ENCODE measurements at regions of chr12 and their contacts with region 1.

Region 1: GRCh38 chr12:55996715-55997534 is at the start of gene SUOX:
- DNase-seq: peak; percentile 98
- H3K4me3 ChIP-seq: peak within 1 kb of the TSS; percentile 17 to 73 (median 40)
- H3K27ac ChIP-seq: no peak within 1 kb of the TSS
- H3K4me1 ChIP-seq: peaks cover 10% of the 10 kb centered on the region
- H3K27me3 ChIP-seq: no peaks in the 10 kb centered on the region
- CTCF ChIP-seq: no peak
- POLR2A ChIP-seq: peak; percentile 85
- total RNA-seq, gene SUOX: 24.3 and 24.8 TPM in 2 replicates

Region 2: DNA sequence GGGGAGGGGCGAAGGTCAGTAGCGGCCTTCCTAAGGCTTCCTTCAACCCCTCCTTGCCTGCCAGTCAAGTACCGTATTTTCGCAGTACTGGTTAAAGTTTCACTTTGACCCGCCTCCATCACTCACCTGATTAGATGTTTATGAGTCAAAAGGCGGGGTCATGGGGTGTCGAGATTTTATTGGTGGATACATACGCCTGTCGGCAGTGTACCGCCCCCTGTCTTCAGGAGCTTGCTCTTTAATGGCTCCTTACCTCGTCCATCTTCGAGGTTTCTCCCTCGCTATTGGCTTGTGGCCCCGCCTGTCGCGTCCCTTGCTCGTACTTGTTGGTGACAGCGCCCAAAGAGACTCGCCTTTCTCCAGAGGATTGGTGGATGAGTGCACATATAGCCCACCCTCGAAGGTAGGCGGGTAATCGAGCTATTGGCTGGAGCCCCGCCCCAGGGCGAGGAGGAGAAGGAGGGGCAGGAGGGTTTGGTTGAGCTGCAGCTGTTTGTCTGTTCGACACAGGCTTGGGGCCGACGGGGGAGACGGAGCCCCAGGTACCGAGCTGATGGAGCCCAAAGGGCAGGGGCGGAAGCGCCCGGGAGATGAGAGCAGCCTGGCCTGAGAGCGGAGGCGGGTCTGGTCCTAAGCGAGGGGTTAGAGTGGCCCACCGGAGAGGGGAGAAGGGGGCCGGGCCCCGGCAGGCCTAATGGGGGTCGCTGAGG is 23.2 kb before region 1 on chr12 and contains the start of gene RAB5B:
- CTCF ChIA-PET with region 1: interaction called, 34 read pairs
- POLR2A ChIA-PET with region 1: interaction called, 8 read pairs
- dilution Hi-C with region 1: no loop called
- intact Hi-C with region 1: no loop called
- DNase-seq: peak; percentile 100
- H3K4me3 ChIP-seq: peak within 1 kb of the TSS; percentile 87 to 93 (median 92)
- H3K27ac ChIP-seq: peak within 1 kb of the TSS; percentile 81
- H3K4me1 ChIP-seq: peaks cover 27% of the 10 kb centered on the region
- H3K27me3 ChIP-seq: no peaks in the 10 kb centered on the region
- CTCF ChIP-seq: no peak
- POLR2A ChIP-seq: peak; percentile 74
- total RNA-seq, gene RAB5B: 97.4 and 103 TPM in 2 replicates

Region 3: DNA sequence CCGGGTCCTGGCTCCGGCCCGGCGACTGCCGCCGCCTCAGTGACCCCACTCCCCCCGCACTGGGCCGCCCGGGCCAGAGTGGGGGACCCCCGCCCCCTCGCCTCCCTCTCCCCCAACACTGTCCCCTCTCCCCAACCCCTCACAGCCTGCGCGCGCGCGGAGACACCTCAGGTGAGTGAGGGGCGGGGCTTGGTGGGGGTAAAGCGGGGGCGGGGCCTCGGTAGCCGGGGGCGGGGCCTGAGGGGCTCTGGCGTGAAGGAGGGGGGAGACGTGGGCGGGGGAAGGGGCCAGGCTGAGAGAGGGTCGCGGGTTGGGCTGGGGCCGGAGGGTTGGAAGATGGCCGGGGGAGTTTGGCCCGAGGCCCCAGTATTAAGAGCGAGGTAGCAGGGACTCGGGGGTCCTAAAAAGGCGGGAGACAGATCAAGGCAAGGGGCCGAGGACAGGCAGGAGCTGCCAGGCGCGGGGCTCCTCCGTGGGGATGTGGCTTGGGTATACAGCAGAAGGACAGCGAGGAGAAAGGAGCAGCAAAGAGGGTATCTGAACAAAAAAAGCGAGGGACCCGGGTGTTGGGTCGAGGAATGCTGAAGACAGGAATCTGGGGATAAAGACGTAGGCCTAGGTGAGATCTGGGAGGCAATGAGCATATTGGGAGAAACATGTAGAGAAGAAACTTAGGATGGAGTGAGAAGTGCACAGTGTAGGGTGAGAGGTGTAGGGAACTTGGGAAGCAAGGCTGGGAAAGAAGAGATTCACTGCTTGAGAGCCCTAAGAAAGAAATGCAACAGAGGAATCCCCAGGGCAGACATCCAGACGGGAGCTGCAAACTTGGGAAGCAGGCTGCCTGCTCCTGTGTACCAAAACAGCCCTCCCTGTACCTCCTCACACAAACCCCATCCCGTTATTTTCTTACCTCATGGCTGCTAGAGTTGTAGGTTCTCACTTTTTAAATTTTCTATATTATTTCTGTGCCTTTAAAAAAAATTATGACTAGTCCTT is 10.9 kb after region 1 on chr12:
- CTCF ChIA-PET with region 1: interaction called, 58 read pairs
- POLR2A ChIA-PET with region 1: interaction called, 16 read pairs
- dilution Hi-C with region 1: no loop called
- intact Hi-C with region 1: loop called (anchors 1 kb)
- DNase-seq: peak; percentile 37
- H3K4me3 ChIP-seq: peak overlapping the region; percentile 53 to 74 (median 53)
- H3K27ac ChIP-seq: no peak overlapping the region
- H3K4me1 ChIP-seq: peaks cover 5% of the 10 kb centered on the region
- H3K27me3 ChIP-seq: no peaks in the 10 kb centered on the region
- CTCF ChIP-seq: no peak
- POLR2A ChIP-seq: no peak

Region 4: GRCh38 chr12:56078990-56079664 is 82.2 kb after region 1 on chr12:
- CTCF ChIA-PET with region 1: interaction called, 4 read pairs
- POLR2A ChIA-PET with region 1: no interaction called
- dilution Hi-C with region 1: no loop called
- intact Hi-C with region 1: loop called (anchors 1 kb)
- DNase-seq: peak; percentile 93
- H3K4me3 ChIP-seq: peak overlapping the region; percentile 31 to 58 (median 36)
- H3K27ac ChIP-seq: no peak overlapping the region
- H3K4me1 ChIP-seq: peaks cover 8% of the 10 kb centered on the region
- H3K27me3 ChIP-seq: peaks cover 2 to 4% of the 10 kb centered on the region in 2 experiments
- CTCF ChIP-seq: peak; percentile 81 to 82
- POLR2A ChIP-seq: no peak

Region 5: DNA sequence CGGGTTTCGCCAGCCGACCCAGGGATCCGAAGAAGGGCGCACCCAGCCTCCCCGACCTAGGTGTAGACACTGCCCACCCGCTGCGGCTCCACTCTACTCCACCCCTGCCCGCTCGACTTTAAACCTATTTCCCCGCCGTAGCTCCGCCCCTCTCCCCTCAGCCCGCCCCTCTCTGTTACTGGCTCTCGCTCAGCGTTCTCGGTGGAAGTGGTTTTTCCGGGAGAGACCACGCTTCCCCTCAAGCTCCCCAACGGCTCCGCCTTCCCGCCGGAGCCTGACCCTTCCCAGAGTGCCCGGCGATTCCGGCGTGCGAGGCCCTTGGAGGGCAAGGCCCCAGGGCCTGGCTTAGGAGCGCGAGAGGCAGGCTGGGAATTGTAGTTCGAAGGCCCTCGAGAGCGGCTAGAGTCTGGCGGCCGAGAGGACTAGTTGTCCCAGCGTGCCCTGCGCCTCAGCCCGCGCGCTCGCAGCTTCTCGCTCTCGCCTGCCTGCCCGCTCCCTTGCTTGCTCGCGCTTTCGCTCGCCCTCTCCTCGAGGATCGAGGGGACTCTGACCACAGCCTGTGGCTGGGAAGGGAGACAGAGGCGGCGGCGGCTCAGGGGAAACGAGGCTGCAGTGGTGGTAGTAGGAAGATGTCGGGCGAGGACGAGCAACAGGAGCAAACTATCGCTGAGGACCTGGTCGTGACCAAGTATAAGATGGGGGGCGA is 107.3 kb after region 1 on chr12 and contains the start of gene PA2G4:
- CTCF ChIA-PET with region 1: interaction called, 9 read pairs
- POLR2A ChIA-PET with region 1: interaction called, 7 read pairs
- dilution Hi-C with region 1: no loop called
- intact Hi-C with region 1: loop called (anchors 1 kb)
- DNase-seq: peak; percentile 99
- H3K4me3 ChIP-seq: peak within 1 kb of the TSS; percentile 49 to 85 (median 68)
- H3K27ac ChIP-seq: peak within 1 kb of the TSS; percentile 60
- H3K4me1 ChIP-seq: peaks cover 25% of the 10 kb centered on the region
- H3K27me3 ChIP-seq: peaks cover 0 to 6% of the 10 kb centered on the region in 2 experiments
- CTCF ChIP-seq: no peak
- POLR2A ChIP-seq: peak; percentile 96
- total RNA-seq, gene PA2G4: 170 and 188 TPM in 2 replicates